ENCODE measurements at regions of chr7 and their contacts with region 1.

Region 1: GRCh38 chr7:157690833-157691585 is 354.2 kb downstream of the DNAJB6 start:
- DNase-seq: no peak
- H3K4me3 Mint-ChIP-seq: peak overlapping the region; percentile 45
- H3K27ac Mint-ChIP-seq: peak overlapping the region; percentile 29
- H3K4me1 Mint-ChIP-seq: peaks cover 2% of the 10 kb centered on the region
- H3K27me3 Mint-ChIP-seq: peaks cover 55% of the 10 kb centered on the region

Region 2: DNA sequence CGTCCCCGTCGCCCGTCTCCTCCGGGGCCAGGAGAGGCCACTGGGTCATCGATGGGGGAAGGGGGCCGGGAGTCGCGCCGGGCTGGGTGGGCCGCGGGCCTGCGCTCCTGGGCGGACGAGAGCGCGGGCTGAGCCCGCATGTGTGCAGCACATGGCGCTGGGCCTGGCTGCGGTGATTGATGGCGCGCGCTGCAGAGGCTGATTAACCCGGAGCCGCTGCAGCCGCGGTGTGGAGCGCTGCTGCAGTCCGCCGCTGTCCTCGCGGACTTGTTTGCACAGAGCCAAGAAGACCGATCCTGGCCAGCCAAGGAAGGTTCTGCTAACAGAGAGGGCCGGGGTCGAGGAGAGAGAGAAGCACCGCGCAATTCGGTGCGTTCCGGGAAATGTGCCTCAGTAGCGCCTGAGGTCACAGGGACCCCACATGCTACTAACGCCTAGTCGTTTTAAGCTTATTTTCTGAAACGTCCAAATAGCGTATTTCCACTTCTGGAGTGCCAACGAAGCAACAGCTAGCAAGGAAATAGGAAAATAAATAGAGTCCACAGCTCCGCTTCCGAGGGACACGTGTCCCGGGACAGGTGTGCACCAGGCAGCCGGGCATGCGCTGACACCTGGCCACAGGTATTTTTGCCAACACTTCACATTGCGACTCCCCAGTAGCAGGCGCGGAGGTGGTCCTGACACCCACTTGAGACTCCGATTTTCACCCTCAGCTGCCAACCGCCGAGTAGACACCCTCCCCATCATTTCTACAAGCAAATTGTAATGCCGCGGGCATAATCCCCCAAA is 686.8 kb before region 1 on chr7:
- intact Hi-C with region 1: loop called (anchors 5 kb)
- DNase-seq: no peak
- H3K4me3 Mint-ChIP-seq: no peak overlapping the region
- H3K27ac Mint-ChIP-seq: peak overlapping the region; percentile 51
- H3K4me1 Mint-ChIP-seq: peaks cover 17% of the 10 kb centered on the region
- H3K27me3 Mint-ChIP-seq: peaks cover 66% of the 10 kb centered on the region

Region 3: GRCh38 chr7:157022681-157023588 is 668.1 kb before region 1 on chr7:
- intact Hi-C with region 1: loop called (anchors 5 kb)
- DNase-seq: no peak
- H3K4me3 Mint-ChIP-seq: no peak overlapping the region
- H3K27ac Mint-ChIP-seq: no peak overlapping the region
- H3K4me1 Mint-ChIP-seq: peaks cover 2% of the 10 kb centered on the region
- H3K27me3 Mint-ChIP-seq: peaks cover 73% of the 10 kb centered on the region

Region 4: DNA sequence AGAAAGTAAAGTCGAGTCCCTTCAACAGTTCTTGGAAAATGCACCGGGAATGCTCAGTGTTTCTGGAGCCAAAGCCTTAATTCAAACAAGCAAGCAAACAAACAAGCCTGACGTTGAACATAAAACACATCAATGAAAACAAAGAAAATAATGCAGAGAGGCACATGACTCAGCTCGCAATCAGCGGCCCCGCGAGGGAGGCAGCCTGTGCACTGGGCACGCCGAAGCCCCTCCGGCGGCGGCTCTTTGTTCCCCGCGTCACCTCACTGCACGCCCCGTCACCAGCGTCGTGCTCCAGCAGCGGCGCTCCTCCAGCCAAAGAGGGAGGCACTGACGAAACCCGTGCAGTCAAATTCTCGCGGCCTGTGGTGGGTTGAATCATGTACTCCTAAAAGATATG is 202.7 kb before region 1 on chr7:
- intact Hi-C with region 1: no loop called
- DNase-seq: no peak
- H3K4me3 Mint-ChIP-seq: no peak overlapping the region
- H3K27ac Mint-ChIP-seq: no peak overlapping the region
- H3K4me1 Mint-ChIP-seq: peaks cover 20% of the 10 kb centered on the region
- H3K27me3 Mint-ChIP-seq: peaks cover 22% of the 10 kb centered on the region

Region 5: GRCh38 chr7:158963771-158964241 is 1272.8 kb after region 1 on chr7:
- intact Hi-C with region 1: no loop called
- DNase-seq: no peak
- H3K4me3 Mint-ChIP-seq: no peak overlapping the region
- H3K27ac Mint-ChIP-seq: no peak overlapping the region
- H3K4me1 Mint-ChIP-seq: no peaks in the 10 kb centered on the region
- H3K27me3 Mint-ChIP-seq: peaks cover 10% of the 10 kb centered on the region

Measured in activated CD4-positive, alpha-beta T cell treated with anti-CD3 and anti-CD28 coated beads, Interleukin-2, amount 10 ng/mL, durations not matched to agents 24 days and 14 days (primary cell).